GM10248 (cell line): ENCODE measurements at regions of chr13 and their contacts with region 1.

Region 1: GRCh38 chr13:91203430-91203829 is 144.1 kb upstream of the MIR17HG start:
- DNase-seq: no peak
- CTCF ChIP-seq: no peak

Region 2: DNA sequence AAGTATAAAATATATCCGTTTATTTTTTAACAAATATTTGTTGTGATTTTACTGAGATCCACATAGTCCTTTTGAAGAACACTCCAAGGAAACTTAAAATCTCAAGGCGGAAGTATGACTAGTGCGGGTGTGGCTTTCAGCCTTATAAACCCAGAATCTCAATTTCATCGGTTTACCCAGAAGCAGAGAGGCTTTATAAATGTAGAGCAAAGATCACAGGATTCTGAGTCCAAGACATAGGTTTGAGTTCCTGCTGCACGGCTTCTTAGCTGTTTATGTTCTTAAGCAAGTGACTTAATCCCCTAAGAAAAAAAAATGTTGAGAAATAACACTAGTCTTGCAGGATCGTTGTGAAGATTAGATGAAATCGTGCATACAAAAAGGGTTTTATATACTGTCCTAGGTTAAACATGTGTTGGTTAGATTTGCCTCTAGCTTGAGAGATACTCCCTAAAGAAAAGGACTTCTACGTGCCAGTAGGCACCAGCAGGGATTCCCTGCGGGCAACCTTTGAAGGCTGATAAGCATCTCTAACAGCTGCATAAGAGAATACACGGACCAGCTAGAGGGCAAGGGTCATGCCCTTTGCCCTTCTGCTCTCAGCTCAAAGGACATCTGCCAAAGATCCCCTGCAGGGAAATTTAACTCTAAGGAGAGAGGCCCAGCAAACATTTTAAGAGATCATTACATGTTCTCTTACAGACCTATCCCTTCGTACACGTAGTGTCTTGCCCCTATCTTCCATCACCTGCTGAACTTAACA is 13.7 kb after region 1 on chr13:
- CTCF ChIA-PET with region 1: interaction called, 11 read pairs
- POLR2A ChIA-PET with region 1: no interaction called
- DNase-seq: no peak
- CTCF ChIP-seq: no peak

Region 3: GRCh38 chr13:91264484-91264883 is 61.1 kb after region 1 on chr13:
- CTCF ChIA-PET with region 1: no interaction called
- POLR2A ChIA-PET with region 1: no interaction called
- DNase-seq: no peak
- CTCF ChIP-seq: no peak